ENCODE measurements at regions of chr17 and their contacts with region 1.

Region 1: GRCh38 chr17:41178341-41178740 is 320 bp upstream of the KRTAP4-2 start:
- DNase-seq: no peak
- ATAC-seq: peak; percentile 75
- H3K4me3 Mint-ChIP-seq: no peak overlapping the region
- H3K27ac Mint-ChIP-seq: peak overlapping the region; percentile 21
- H3K4me1 Mint-ChIP-seq: peaks cover 39% of the 10 kb centered on the region
- H3K27me3 Mint-ChIP-seq: peaks cover 2% of the 10 kb centered on the region
- CTCF ChIP-seq: no peak

Region 2: GRCh38 chr17:40542558-40543411 is 635.6 kb before region 1 on chr17:
- CTCF ChIA-PET with region 1: no interaction called
- POLR2A ChIA-PET with region 1: no interaction called
- intact Hi-C with region 1: no loop called
- DNase-seq: peak; percentile 40
- ATAC-seq: peak; percentile 63
- H3K4me3 Mint-ChIP-seq: peak overlapping the region; percentile 68
- H3K27ac Mint-ChIP-seq: peak overlapping the region; percentile 93
- H3K4me1 Mint-ChIP-seq: peaks cover 77% of the 10 kb centered on the region
- H3K27me3 Mint-ChIP-seq: no peaks in the 10 kb centered on the region
- CTCF ChIP-seq: no peak

Region 3: DNA sequence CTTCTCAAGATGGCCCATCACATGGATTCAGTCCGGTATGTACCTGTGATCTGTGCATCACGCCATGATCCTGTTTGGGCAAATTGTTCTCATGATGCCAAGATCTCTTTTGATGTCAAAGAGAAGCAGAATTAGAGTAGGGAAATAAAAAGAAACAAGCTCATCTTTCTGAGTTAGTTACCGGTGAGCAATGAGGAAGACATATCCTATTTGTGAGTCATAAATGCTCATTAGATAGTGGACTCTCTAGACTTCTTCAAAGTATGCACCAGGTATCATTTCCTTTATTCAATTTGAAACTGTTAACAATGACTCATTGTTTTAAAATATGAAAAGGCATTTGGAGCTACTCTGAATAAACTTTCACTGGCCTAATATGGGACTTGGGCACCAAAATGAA is 46.4 kb before region 1 on chr17:
- CTCF ChIA-PET with region 1: no interaction called
- POLR2A ChIA-PET with region 1: no interaction called
- intact Hi-C with region 1: loop called (anchors 5 kb)
- DNase-seq: no peak
- ATAC-seq: peak; percentile 71
- H3K4me3 Mint-ChIP-seq: no peak overlapping the region
- H3K27ac Mint-ChIP-seq: no peak overlapping the region
- H3K4me1 Mint-ChIP-seq: peaks cover 12% of the 10 kb centered on the region
- H3K27me3 Mint-ChIP-seq: no peaks in the 10 kb centered on the region
- CTCF ChIP-seq: no peak

Region 4: DNA sequence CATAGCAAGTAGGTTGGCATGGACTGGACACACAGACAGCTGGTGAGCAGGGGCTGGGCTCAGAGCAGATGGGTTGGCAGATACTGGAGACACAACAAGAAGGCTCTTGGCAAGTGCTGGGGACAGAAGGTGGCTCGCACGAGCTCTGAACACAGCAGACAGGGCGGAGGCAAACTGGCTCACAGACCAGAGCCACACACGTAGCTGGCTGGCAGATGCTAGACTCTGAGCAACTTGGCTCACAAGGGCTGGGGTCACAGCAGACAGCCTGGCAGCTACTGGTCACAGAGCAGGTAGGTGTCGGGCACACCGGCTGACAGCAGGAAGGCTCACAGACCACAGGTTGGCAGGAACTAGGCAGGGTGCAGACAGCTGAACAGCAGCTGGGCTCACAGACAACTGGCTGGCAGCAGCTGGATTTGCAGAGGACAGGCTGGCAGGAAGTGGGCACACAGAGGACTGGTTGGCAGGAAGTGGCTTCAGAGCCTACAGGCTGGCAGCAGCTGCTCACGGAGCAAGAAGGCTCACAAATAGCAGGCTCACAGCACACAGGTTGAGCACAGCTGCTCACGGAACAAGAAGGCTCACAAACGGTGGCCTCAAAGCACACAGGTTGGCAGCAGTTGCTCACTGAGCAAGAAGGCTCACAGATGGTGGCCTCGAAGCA is 130.0 kb after region 1 on chr17:
- CTCF ChIA-PET with region 1: no interaction called
- POLR2A ChIA-PET with region 1: no interaction called
- intact Hi-C with region 1: loop called (anchors 1 kb)
- DNase-seq: peak; percentile 48
- ATAC-seq: peak; percentile 85
- H3K4me3 Mint-ChIP-seq: peak overlapping the region; percentile 65
- H3K27ac Mint-ChIP-seq: peak overlapping the region; percentile 88
- H3K4me1 Mint-ChIP-seq: peaks cover 42% of the 10 kb centered on the region
- H3K27me3 Mint-ChIP-seq: peaks cover 4% of the 10 kb centered on the region
- CTCF ChIP-seq: no peak